Activated T-helper 2 cell treated with anti-CD3 and anti-CD28 coated beads, Interferon-gamma antibody, Interleukin-2, Interleukin-4, amounts not matched to agents 10 μg/mL and 5 μg/mL and 100 μg/mL, durations not matched to agents 14 hours and 24 hours and 36 hours (primary cell): ENCODE measurements at regions of chr10 and their contacts with region 1.

Region 1: GRCh38 chr10:103451831-103452505 is at the start of gene CALHM2:
- DNase-seq: peak; percentile 46
- H3K4me3 Mint-ChIP-seq: peak within 1 kb of the TSS; percentile 91
- H3K27ac Mint-ChIP-seq: peak within 1 kb of the TSS; percentile 79
- H3K4me1 Mint-ChIP-seq: peaks cover 45% of the 10 kb centered on the region
- H3K27me3 Mint-ChIP-seq: no peaks in the 10 kb centered on the region
- total RNA-seq, gene CALHM2: 20.3 and 21.1 TPM in 2 replicates

Region 2: DNA sequence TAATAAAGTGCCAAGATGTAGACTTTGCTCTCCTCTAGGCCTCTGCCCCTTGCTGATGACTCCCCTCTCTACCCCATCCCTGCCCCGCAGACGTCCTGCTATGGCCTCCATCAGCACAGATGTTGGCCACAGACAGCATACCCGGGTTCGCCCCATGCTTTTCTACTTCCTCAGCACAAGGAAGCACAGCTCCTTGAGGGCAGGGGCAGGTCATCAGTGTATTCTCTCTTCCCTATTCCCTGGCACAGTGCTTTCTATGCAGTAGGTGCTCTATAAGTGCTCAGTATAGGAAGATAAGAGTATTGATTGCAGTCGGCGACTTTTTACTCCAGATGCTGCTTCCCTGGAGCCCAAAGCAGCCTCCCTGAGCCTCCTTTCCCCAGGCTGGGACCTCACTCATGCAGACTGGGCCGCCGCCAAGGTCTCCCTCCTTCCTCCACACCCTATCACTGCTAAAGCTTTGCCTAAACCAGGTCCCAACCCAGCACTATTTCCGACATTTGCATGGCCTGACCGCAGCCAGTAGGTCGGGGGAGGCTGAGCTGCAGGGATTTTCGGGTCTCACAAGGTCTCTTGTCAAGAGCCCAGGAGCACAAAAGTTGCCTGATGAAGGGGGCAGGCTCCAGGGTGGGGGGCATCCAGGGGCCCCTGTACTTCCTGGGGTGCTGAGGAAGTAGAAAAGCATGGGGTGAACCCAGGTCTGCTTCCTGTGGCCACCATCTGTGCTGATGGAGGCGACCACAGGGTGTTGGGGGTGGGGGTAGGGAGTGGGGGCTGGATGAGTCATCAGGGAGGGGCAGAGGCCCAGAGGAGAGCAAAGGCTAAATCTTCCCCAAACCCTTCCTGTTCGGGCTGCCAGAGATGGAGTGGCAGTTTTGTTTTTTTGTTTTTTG is 19.0 kb after region 1 on chr10:
- intact Hi-C with region 1: loop called (anchors 1 kb)
- DNase-seq: peak; percentile 76
- H3K4me3 Mint-ChIP-seq: peak overlapping the region; percentile 46
- H3K27ac Mint-ChIP-seq: peak overlapping the region; percentile 92
- H3K4me1 Mint-ChIP-seq: peaks cover 45% of the 10 kb centered on the region
- H3K27me3 Mint-ChIP-seq: no peaks in the 10 kb centered on the region

Region 3: GRCh38 chr10:103481974-103482531 is 30.1 kb after region 1 on chr10:
- intact Hi-C with region 1: loop called (anchors 2 kb)
- DNase-seq: no peak
- H3K4me3 Mint-ChIP-seq: no peak overlapping the region
- H3K27ac Mint-ChIP-seq: no peak overlapping the region
- H3K4me1 Mint-ChIP-seq: peaks cover 14% of the 10 kb centered on the region
- H3K27me3 Mint-ChIP-seq: peaks cover 2% of the 10 kb centered on the region